Naive thymus-derived CD4-positive, alpha-beta T cell (primary cell): ENCODE measurements at regions of chr1 and their contacts with region 1.

Region 1: GRCh38 chr1:25997828-25998761 is at the start of gene PAFAH2:
- DNase-seq: peak; percentile 83 to 99 (median 98)
- ATAC-seq: peak; percentile 98
- H3K4me3 ChIP-seq: peak within 1 kb of the TSS; percentile 76
- H3K4me3 Mint-ChIP-seq: peak within 1 kb of the TSS; percentile 91 to 99 (median 96)
- H3K27ac ChIP-seq: peak within 1 kb of the TSS; percentile 89
- H3K27ac Mint-ChIP-seq: peak within 1 kb of the TSS; percentile 96 to 99 (median 99)
- H3K4me1 ChIP-seq: peaks cover 8 to 18% of the 10 kb centered on the region in 2 donors
- H3K4me1 Mint-ChIP-seq: peaks cover 19 to 50% (median 40%) of the 10 kb centered on the region in 7 donors
- H3K27me3 ChIP-seq: no peaks in the 10 kb centered on the region
- H3K27me3 Mint-ChIP-seq: no peaks in the 10 kb centered on the region
- total RNA-seq, gene PAFAH2: 11.4 to 36.0 (median 12.7) TPM

Region 2: DNA sequence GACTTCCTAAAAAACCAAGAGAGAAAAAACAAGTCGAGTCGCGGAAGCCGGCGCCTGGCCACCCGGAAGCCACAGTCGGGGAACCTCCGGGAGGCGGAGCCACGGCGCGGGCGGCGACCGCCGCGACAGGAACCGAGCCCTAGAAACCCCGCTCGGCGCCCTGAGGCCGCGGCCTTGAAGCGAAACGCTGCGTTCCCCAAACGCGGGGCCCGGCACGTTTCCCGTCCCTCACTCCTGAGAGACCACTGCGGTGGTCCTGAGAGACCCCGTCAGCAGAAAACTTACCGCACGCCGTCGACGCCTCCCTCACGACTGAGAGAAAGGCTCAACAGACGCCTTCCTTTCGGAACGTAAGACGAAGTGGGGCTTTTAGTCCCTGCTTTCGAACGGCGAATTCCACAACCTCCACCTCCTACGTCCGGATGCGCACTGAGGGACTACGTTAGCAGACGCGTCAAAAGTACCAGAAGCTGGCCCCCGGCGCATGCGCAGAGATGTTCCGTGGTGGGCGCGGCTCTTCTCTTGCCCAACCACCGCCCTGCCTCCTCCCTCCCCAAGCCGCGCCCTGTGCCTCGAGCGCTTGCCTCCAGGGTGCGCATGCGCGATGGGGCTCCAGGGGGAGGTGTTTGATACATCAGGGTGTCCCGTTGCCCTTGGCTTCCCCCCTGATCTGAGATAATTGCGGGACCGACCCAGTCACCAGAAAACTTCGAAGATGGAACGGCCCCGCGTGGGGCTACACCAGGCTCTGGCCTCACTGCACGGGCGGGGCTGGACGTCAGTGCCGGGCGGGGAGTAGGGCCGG is 750.9 kb before region 1 on chr1 and contains the start of gene RSRP1:
- CTCF ChIA-PET with region 1: no interaction called
- POLR2A ChIA-PET with region 1: no interaction called
- intact Hi-C with region 1: loop called in 1 of 2 experiments (anchors 1 kb)
- DNase-seq: peak; percentile 99 to 100 (median 99)
- ATAC-seq: peak; percentile 91
- H3K4me3 ChIP-seq: peak within 1 kb of the TSS; percentile 94
- H3K4me3 Mint-ChIP-seq: peak within 1 kb of the TSS; percentile 96 to 99 (median 97)
- H3K27ac ChIP-seq: peak within 1 kb of the TSS; percentile 98
- H3K27ac Mint-ChIP-seq: peak within 1 kb of the TSS; percentile 98 to 100 (median 100)
- H3K4me1 ChIP-seq: peaks cover 30 to 35% of the 10 kb centered on the region in 2 donors
- H3K4me1 Mint-ChIP-seq: peaks cover 28 to 65% (median 51%) of the 10 kb centered on the region in 7 donors
- H3K27me3 ChIP-seq: no peaks in the 10 kb centered on the region
- H3K27me3 Mint-ChIP-seq: peaks cover 0 to 8% (median 0%) of the 10 kb centered on the region in 5 donors
- total RNA-seq, gene RSRP1: 230 to 449 (median 425) TPM

Region 3: DNA sequence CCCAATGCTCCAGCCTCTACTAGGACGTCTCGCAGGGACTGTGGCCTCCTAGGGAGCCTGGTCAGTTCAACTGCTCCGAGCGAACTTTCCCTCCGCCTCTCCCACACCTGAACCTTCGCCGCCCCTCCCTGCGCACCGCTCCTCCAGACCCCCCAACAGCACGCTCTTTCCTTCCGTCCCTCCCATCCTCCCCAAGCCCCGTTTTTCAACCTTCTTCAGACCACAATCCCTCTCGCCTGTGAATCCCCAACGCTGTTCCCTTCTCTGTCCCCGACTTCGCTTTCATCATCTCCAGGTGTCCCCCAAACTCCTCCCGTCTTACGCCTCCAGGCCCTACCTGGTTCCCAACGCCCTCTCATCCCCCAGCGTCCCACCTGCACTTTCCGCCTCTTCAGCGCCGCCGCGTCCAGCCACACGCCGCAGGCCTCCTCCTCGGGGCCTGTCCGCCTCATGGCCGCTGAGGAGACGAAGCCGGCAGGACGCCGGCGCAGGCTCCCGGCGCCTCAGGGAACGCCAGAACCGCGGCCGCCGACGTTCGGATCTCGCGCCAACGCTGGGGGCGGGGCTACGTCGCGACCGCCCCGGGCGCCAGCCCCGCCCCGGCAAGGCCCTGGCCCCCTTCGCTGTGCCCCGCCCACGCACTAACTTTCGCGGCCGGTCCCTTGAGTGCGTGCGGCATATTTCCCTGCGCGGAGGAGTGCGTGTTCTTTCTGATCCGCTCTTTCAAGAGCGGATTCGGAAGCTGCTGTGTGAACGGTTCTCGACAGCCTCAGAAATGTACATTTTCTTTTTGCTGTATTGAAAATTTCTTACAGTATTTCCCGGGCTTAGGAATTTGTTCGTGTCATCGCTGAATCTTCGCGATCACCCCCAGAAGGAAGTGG is 138.9 kb before region 1 on chr1 and contains the start of gene AUNIP:
- CTCF ChIA-PET with region 1: interaction called, 4 read pairs
- POLR2A ChIA-PET with region 1: interaction called, 10 read pairs
- intact Hi-C with region 1: loop called (anchors 1 kb)
- DNase-seq: peak; percentile 84 to 95 (median 90)
- ATAC-seq: peak; percentile 100
- H3K4me3 ChIP-seq: peak within 1 kb of the TSS; percentile 78
- H3K4me3 Mint-ChIP-seq: peak within 1 kb of the TSS; percentile 87 to 99 (median 94)
- H3K27ac ChIP-seq: peak within 1 kb of the TSS; percentile 77
- H3K27ac Mint-ChIP-seq: peak within 1 kb of the TSS; percentile 83 to 97 (median 95)
- H3K4me1 ChIP-seq: peaks cover 9 to 10% of the 10 kb centered on the region in 2 donors
- H3K4me1 Mint-ChIP-seq: peaks cover 0 to 32% (median 24%) of the 10 kb centered on the region in 7 donors
- H3K27me3 ChIP-seq: no peaks in the 10 kb centered on the region
- H3K27me3 Mint-ChIP-seq: no peaks in the 10 kb centered on the region
- total RNA-seq, gene AUNIP: 0.83 to 4.3 TPM in 2 of 5 experiments, not detected in the others

Region 4: GRCh38 chr1:25958465-25958864 is 39.6 kb before region 1 on chr1:
- CTCF ChIA-PET with region 1: interaction called, 5 read pairs
- POLR2A ChIA-PET with region 1: interaction called, 7 read pairs
- intact Hi-C with region 1: loop called in 1 of 2 experiments (anchors 5 kb)
- DNase-seq: no peak
- ATAC-seq: no peak
- H3K4me3 ChIP-seq: no peak overlapping the region
- H3K4me3 Mint-ChIP-seq: no peak overlapping the region
- H3K27ac ChIP-seq: no peak overlapping the region
- H3K27ac Mint-ChIP-seq: peak overlapping the region in 1 of 9 donors; percentile 2
- H3K4me1 ChIP-seq: no peaks in the 10 kb centered on the region
- H3K4me1 Mint-ChIP-seq: peaks cover 0 to 19% (median 9%) of the 10 kb centered on the region in 7 donors
- H3K27me3 ChIP-seq: no peaks in the 10 kb centered on the region
- H3K27me3 Mint-ChIP-seq: peaks cover 0 to 2% (median 0%) of the 10 kb centered on the region in 5 donors

Region 5: GRCh38 chr1:26035959-26036755 is 38.1 kb after region 1 on chr1:
- CTCF ChIA-PET with region 1: no interaction called
- POLR2A ChIA-PET with region 1: no interaction called
- intact Hi-C with region 1: loop called in 1 of 2 experiments (anchors 1 kb)
- DNase-seq: peak; percentile 53 to 89 (median 73)
- ATAC-seq: peak; percentile 87
- H3K4me3 ChIP-seq: peak overlapping the region; percentile 99
- H3K4me3 Mint-ChIP-seq: peak overlapping the region; percentile 93 to 97 (median 96)
- H3K27ac ChIP-seq: peak overlapping the region; percentile 87
- H3K27ac Mint-ChIP-seq: peak overlapping the region; percentile 74 to 96 (median 90)
- H3K4me1 ChIP-seq: peaks cover 5 to 6% of the 10 kb centered on the region in 2 donors
- H3K4me1 Mint-ChIP-seq: peaks cover 0 to 15% (median 8%) of the 10 kb centered on the region in 7 donors
- H3K27me3 ChIP-seq: no peaks in the 10 kb centered on the region
- H3K27me3 Mint-ChIP-seq: peaks cover 0 to 19% (median 0%) of the 10 kb centered on the region in 5 donors